CD8-positive, alpha-beta memory T cell (primary cell): ENCODE measurements at regions of chr15 and their contacts with region 1.

Region 1: GRCh38 chr15:43285609-43286037 is 18.9 kb upstream of the TGM5 start:
- DNase-seq: peak; percentile 15 to 54 (median 48)
- H3K4me3 ChIP-seq: no peak overlapping the region
- H3K4me3 Mint-ChIP-seq: no peak overlapping the region
- H3K27ac ChIP-seq: no peak overlapping the region
- H3K27ac Mint-ChIP-seq: peak overlapping the region in 1 of 8 donors; percentile 55
- H3K4me1 ChIP-seq: no peaks in the 10 kb centered on the region
- H3K4me1 Mint-ChIP-seq: peaks cover 0 to 4% (median 0%) of the 10 kb centered on the region in 3 donors
- H3K27me3 ChIP-seq: no peaks in the 10 kb centered on the region
- H3K27me3 Mint-ChIP-seq: peaks cover 6 to 21% of the 10 kb centered on the region in 2 donors

Region 2: GRCh38 chr15:43274136-43274535 is 11.5 kb before region 1 on chr15:
- CTCF ChIA-PET with region 1: interaction called, 15 read pairs
- POLR2A ChIA-PET with region 1: no interaction called
- DNase-seq: no peak
- H3K4me3 ChIP-seq: no peak overlapping the region
- H3K4me3 Mint-ChIP-seq: no peak overlapping the region
- H3K27ac ChIP-seq: no peak overlapping the region
- H3K27ac Mint-ChIP-seq: no peak overlapping the region
- H3K4me1 ChIP-seq: no peaks in the 10 kb centered on the region
- H3K4me1 Mint-ChIP-seq: peaks cover 5 to 9% (median 7%) of the 10 kb centered on the region in 3 donors
- H3K27me3 ChIP-seq: no peaks in the 10 kb centered on the region
- H3K27me3 Mint-ChIP-seq: peaks cover 19 to 46% of the 10 kb centered on the region in 2 donors

Region 3: GRCh38 chr15:43346305-43346704 is 60.7 kb after region 1 on chr15:
- CTCF ChIA-PET with region 1: no interaction called
- POLR2A ChIA-PET with region 1: no interaction called
- DNase-seq: no peak
- H3K4me3 ChIP-seq: no peak overlapping the region
- H3K4me3 Mint-ChIP-seq: no peak overlapping the region
- H3K27ac ChIP-seq: no peak overlapping the region
- H3K27ac Mint-ChIP-seq: no peak overlapping the region
- H3K4me1 ChIP-seq: no peaks in the 10 kb centered on the region
- H3K4me1 Mint-ChIP-seq: no peaks in the 10 kb centered on the region
- H3K27me3 ChIP-seq: no peaks in the 10 kb centered on the region
- H3K27me3 Mint-ChIP-seq: no peaks in the 10 kb centered on the region